MCF 10A (cell line): ENCODE measurements at regions of chr2 and their contacts with region 1.

Region 1: DNA sequence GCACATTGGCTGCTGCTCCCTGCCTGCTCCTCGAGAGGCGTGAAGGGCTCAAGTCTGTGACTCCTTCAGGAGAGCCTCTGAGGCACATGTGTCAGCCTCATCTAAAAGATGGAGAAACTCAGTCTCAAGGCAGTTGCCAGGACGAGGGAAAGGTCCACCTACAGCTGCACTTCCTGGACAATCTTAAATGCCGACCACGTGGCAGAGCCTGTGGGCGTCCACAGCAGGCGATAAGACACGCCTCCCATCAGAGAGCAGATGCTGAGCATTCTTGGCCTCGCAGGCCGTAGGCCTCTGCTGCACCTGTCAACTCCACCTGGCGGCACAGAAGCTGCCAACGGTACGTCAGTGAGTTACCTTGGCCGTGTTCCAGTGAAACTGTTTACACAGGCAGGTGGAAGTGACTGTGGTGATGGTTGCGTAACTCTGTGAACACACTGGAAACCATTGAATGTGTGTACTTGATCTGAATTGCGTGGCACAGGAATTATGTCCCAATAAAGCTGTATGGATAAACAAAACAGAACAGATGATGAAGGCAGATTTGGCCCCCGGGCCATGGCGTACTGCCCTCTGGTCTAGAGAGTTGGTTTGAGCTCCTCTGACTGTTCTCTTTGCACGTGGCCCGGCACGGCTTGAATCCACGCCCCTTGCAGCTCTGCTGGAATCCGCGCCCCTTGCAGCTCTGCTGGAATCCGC is 114.5 kb downstream of the RNF144A start:
- DNase-seq: peak; percentile 99
- H3K4me3 Mint-ChIP-seq: no peak overlapping the region
- H3K27ac Mint-ChIP-seq: peak overlapping the region; percentile 46
- H3K4me1 Mint-ChIP-seq: no peaks in the 10 kb centered on the region
- H3K27me3 Mint-ChIP-seq: peaks cover 77% of the 10 kb centered on the region
- CTCF ChIP-seq: no peak

Region 2: GRCh38 chr2:6896930-6897759 is 134.6 kb before region 1 on chr2:
- CTCF ChIA-PET with region 1: interaction called, 10 read pairs
- POLR2A ChIA-PET with region 1: no interaction called
- intact Hi-C with region 1: no loop called
- DNase-seq: peak; percentile 46
- H3K4me3 Mint-ChIP-seq: no peak overlapping the region
- H3K27ac Mint-ChIP-seq: no peak overlapping the region
- H3K4me1 Mint-ChIP-seq: no peaks in the 10 kb centered on the region
- H3K27me3 Mint-ChIP-seq: peaks cover 68% of the 10 kb centered on the region
- CTCF ChIP-seq: peak; percentile 33

Region 3: GRCh38 chr2:7007846-7008741 is 23.6 kb before region 1 on chr2:
- CTCF ChIA-PET with region 1: no interaction called
- POLR2A ChIA-PET with region 1: no interaction called
- intact Hi-C with region 1: no loop called
- DNase-seq: peak; percentile 92
- H3K4me3 Mint-ChIP-seq: no peak overlapping the region
- H3K27ac Mint-ChIP-seq: peak overlapping the region; percentile 18
- H3K4me1 Mint-ChIP-seq: peaks cover 18% of the 10 kb centered on the region
- H3K27me3 Mint-ChIP-seq: peaks cover 28% of the 10 kb centered on the region
- CTCF ChIP-seq: no peak